Uterus (tissue), 4 donors: ENCODE measurements at regions of chr10 and their contacts with region 1.

Region 1: GRCh38 chr10:30534465-30535144 is 94.9 kb downstream of the LYZL2 start:
- DNase-seq: peak; percentile 72 to 81
- H3K4me3 ChIP-seq: no peak overlapping the region
- H3K27ac ChIP-seq: no peak overlapping the region
- H3K4me1 ChIP-seq: no peaks in the 10 kb centered on the region
- H3K27me3 ChIP-seq: no peaks in the 10 kb centered on the region
- CTCF ChIP-seq: peak; percentile 85 to 95 (median 92)
- POLR2A ChIP-seq: no peak

Region 2: GRCh38 chr10:30392564-30392990 is 142.0 kb before region 1 on chr10:
- intact Hi-C with region 1: loop called (anchors 5 kb)
- DNase-seq: peak; percentile 61 to 70
- H3K4me3 ChIP-seq: no peak overlapping the region
- H3K27ac ChIP-seq: no peak overlapping the region
- H3K4me1 ChIP-seq: no peaks in the 10 kb centered on the region
- H3K27me3 ChIP-seq: no peaks in the 10 kb centered on the region
- CTCF ChIP-seq: peak; percentile 89 to 94 (median 92)
- POLR2A ChIP-seq: no peak

Region 3: DNA sequence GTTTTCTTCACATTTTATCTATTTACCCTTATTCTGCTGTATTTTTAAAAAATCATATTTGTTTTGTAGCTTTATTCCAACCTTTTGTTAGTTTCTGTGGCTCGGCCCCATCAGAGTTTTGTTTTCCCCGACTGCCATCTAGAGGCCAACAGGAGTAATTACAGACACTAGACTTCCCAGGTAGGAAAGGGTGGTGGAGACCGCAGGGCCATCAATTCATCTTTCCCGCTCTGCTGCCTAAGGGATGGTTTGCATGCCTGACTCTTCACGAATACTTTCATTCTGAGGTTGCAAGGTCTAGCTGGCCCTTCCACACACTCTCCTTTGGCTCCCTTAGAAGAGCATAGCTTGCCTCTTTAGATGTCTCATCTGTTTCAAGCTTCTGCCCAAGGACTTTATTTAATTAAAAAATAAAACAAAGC is 56.7 kb after region 1 on chr10:
- intact Hi-C with region 1: loop called (anchors 5 kb)
- DNase-seq: peak; percentile 27 to 34
- H3K4me3 ChIP-seq: no peak overlapping the region
- H3K27ac ChIP-seq: no peak overlapping the region
- H3K4me1 ChIP-seq: no peaks in the 10 kb centered on the region
- H3K27me3 ChIP-seq: no peaks in the 10 kb centered on the region
- CTCF ChIP-seq: peak; percentile 73 to 87 (median 79)
- POLR2A ChIP-seq: no peak